Prostate gland (tissue), 2 donors: ENCODE measurements at regions of chr6 and their contacts with region 1.

Region 1: GRCh38 chr6:31366693-31367470 is 9.9 kb upstream of the HLA-B start:
- DNase-seq: peak; percentile 87
- H3K4me3 ChIP-seq: peak overlapping the region; percentile 6 to 17
- H3K27ac ChIP-seq: peak overlapping the region; percentile 27 to 42
- H3K4me1 ChIP-seq: no peaks in the 10 kb centered on the region
- H3K27me3 ChIP-seq: no peaks in the 10 kb centered on the region
- CTCF ChIP-seq: peak; percentile 80 to 98 (median 96)
- POLR2A ChIP-seq: no peak

Region 2: DNA sequence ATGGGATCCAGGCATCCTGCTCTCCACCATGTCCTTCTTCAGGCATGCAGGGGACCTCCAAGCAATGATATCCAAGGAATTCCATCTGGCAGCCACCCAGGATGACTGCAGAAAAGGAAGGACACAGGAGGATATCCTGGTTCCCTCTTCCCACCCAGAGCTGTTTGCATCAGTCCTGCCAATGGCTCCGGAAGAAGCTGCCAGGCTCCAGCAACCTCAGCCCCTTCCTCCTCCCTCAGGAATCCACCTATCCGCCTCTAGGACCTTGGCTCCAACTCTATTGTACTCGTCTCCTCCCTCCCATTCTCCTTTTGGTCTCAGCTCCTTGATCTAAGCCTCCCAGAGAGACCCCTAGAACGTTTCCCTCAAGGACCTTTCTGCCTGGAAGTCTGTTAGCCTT is 227.3 kb before region 1 on chr6:
- intact Hi-C with region 1: loop called (anchors 2 kb)
- DNase-seq: no peak
- H3K4me3 ChIP-seq: no peak overlapping the region
- H3K27ac ChIP-seq: no peak overlapping the region
- H3K4me1 ChIP-seq: no peaks in the 10 kb centered on the region
- H3K27me3 ChIP-seq: no peaks in the 10 kb centered on the region
- CTCF ChIP-seq: no peak
- POLR2A ChIP-seq: no peak

Region 3: DNA sequence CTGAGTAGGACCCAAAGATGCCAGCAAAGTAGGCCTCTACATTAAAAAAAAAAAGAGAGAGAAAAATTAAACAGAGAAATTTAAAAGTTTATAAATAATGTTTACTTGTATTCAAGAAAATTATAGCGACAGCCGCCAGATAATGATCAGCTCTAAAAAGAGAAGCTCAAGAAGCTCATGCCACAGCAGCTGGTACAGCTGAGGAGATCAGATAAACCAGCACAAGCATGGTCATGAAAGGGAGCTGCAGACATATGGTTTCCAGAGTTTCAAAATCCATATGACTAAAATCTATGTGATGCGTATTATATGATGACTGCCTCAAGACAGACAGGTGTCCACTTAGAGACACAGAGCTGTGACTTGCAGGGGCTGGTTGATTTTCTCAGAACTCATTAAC is 81.4 kb before region 1 on chr6:
- intact Hi-C with region 1: no loop called
- DNase-seq: no peak
- H3K4me3 ChIP-seq: no peak overlapping the region
- H3K27ac ChIP-seq: no peak overlapping the region
- H3K4me1 ChIP-seq: no peaks in the 10 kb centered on the region
- H3K27me3 ChIP-seq: no peaks in the 10 kb centered on the region
- CTCF ChIP-seq: no peak
- POLR2A ChIP-seq: no peak